Endothelial cell of umbilical vein (primary cell): ENCODE measurements at regions of chr3 and their contacts with region 1.

Region 1: DNA sequence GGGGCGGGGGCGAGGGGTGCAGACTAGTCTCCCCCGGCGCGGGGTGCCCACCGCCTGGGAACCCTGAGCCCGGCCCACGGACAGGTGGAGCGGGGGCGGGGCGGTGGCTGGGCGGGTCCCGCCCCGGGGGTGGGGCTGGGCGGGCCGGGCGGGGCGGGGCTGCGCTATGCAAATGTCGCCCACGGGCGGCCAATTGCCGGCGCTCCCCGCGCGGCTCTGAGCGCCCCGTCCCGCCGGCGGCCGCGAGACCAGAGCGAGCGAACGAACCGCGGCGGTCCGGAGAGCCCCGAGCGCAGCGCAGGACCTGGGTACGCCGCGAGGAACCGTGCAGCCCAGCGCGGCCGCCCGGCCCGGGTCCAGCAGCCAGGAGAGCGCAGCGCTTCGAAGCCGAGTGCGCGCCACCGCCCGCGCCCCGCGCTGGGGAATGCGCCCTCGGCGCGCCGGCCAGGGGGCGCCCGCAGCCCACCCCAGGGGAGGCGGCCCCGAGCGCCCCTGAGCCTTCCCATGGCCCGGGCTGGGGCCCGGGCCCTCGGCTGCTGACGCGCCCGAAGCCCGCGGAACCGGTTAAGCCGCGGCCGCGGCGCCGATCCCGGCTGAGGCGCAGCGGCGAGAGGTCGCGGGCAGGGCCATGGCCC is at the start of gene SEMA3F:
- DNase-seq: peak; percentile 72
- H3K4me3 ChIP-seq: peak within 1 kb of the TSS; percentile 29 to 77 (median 77)
- H3K27ac ChIP-seq: peak within 1 kb of the TSS; percentile 40
- H3K4me1 ChIP-seq: peaks cover 50% of the 10 kb centered on the region
- H3K27me3 ChIP-seq: no peaks in the 10 kb centered on the region
- CTCF ChIP-seq: peak; percentile 19 to 26
- POLR2A ChIP-seq: peak; percentile 86
- total RNA-seq, gene SEMA3F: 99.1 and 143 TPM in 2 replicates

Region 2: GRCh38 chr3:49882166-49882565 is 272.8 kb before region 1 on chr3:
- CTCF ChIA-PET with region 1: no interaction called
- POLR2A ChIA-PET with region 1: no interaction called
- dilution Hi-C with region 1: no loop called
- intact Hi-C with region 1: no loop called
- DNase-seq: no peak
- H3K4me3 ChIP-seq: no peak overlapping the region
- H3K27ac ChIP-seq: no peak overlapping the region
- H3K4me1 ChIP-seq: no peaks in the 10 kb centered on the region
- H3K27me3 ChIP-seq: peaks cover 7 to 8% of the 10 kb centered on the region in 2 experiments
- CTCF ChIP-seq: no peak
- POLR2A ChIP-seq: no peak

Region 3: DNA sequence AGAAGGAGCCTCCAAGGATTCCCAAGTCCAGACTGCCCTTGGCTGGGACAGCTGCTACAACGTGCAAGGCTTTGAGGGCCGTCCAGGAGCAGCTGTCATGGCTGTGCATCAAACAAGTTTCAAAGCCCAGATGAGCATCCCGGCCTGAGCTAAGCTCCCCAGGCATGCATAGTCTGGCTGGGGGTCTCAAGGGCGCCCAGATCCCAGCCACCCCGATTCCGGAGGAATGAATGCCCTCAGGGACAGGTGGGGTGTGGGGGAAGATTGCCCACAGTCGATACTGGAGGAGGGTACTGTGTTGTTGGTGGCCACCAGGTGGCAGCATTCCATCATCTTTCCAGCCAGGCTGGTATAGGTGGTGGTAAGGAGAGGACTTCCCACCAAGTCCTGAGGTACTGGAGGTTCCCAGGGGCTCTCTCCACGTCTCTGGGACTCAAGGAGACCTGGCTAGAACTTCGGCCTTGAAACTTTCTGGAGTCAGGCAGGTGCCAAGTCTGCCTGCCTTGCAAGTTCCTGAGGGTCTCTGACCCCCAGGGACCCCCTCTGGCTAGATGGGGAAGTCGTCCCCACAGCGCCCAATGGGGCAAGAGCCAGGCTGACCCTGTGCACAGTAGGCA is 33.4 kb before region 1 on chr3:
- CTCF ChIA-PET with region 1: interaction called, 40 read pairs
- POLR2A ChIA-PET with region 1: no interaction called
- dilution Hi-C with region 1: no loop called
- intact Hi-C with region 1: loop called (anchors 1 kb)
- DNase-seq: peak; percentile 80
- H3K4me3 ChIP-seq: no peak overlapping the region
- H3K27ac ChIP-seq: no peak overlapping the region
- H3K4me1 ChIP-seq: peaks cover 7% of the 10 kb centered on the region
- H3K27me3 ChIP-seq: no peaks in the 10 kb centered on the region
- CTCF ChIP-seq: peak; percentile 75 to 79
- POLR2A ChIP-seq: peak; percentile 77

Region 4: DNA sequence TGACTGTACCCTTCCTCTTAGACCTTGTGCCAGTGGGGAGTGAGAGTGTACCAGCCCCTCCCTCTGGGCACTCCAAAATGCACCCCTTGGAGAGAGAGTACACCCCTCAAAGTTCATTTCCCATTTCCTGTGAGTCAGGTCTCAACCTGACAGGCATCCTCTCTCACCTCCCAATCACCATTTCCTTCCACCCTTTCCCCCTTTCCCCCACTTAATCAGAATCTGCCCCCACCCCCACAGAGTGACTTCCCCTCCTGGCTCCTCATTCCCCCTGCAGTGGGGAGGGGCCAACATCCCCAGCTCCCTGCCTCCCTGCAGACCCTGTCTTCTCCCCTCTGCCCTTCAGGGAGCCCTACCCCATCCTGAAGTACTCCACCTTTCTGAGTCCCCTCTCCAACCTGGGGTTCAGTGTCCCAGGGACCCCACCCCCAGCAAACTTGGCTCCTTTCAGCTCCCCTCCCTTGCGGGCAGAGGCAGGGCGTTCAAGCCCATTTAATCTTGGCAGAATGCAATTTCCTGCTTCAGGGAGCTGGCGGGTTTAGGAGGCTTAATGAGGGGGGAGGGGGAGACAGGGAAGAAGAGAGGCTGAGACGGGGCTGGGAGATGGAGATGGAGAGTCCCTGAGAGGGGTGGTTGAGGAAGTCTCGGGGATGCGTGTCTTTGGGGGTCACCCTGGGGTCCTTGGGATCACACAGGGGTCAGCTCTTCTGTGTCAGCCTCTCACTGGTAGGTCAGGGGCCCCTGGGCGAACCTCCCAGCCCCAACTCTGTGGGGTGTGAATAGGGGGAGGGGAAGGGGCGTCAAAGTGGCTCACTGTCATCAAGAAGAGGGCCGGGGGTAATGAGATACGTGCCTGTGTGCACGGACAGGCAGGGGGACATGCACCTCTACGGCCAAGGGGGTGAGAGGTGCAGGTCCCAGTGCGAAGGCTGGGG is 16.4 kb before region 1 on chr3:
- CTCF ChIA-PET with region 1: interaction called, 14 read pairs
- POLR2A ChIA-PET with region 1: interaction called, 3 read pairs
- dilution Hi-C with region 1: no loop called
- intact Hi-C with region 1: loop called (anchors 1 kb)
- DNase-seq: peak; percentile 52
- H3K4me3 ChIP-seq: no peak overlapping the region
- H3K27ac ChIP-seq: peak overlapping the region; percentile 27
- H3K4me1 ChIP-seq: peaks cover 26% of the 10 kb centered on the region
- H3K27me3 ChIP-seq: no peaks in the 10 kb centered on the region
- CTCF ChIP-seq: no peak
- POLR2A ChIP-seq: no peak

Region 5: GRCh38 chr3:50170689-50171088 is 15.7 kb after region 1 on chr3:
- CTCF ChIA-PET with region 1: interaction called, 19 read pairs
- POLR2A ChIA-PET with region 1: interaction called, 10 read pairs
- dilution Hi-C with region 1: no loop called
- intact Hi-C with region 1: loop called (anchors 1 kb)
- DNase-seq: peak; percentile 90
- H3K4me3 ChIP-seq: no peak overlapping the region
- H3K27ac ChIP-seq: peak overlapping the region; percentile 99
- H3K4me1 ChIP-seq: peaks cover 57% of the 10 kb centered on the region
- H3K27me3 ChIP-seq: no peaks in the 10 kb centered on the region
- CTCF ChIP-seq: no peak
- POLR2A ChIP-seq: peak; percentile 60

Region 6: GRCh38 chr3:50235716-50236496 is 80.9 kb after region 1 on chr3 and contains the start of gene GNAI2:
- CTCF ChIA-PET with region 1: no interaction called
- POLR2A ChIA-PET with region 1: interaction called, 3 read pairs
- dilution Hi-C with region 1: no loop called
- intact Hi-C with region 1: loop called (anchors 5 kb)
- DNase-seq: peak; percentile 99
- H3K4me3 ChIP-seq: peak within 1 kb of the TSS; percentile 80 to 88 (median 81)
- H3K27ac ChIP-seq: peak within 1 kb of the TSS; percentile 60
- H3K4me1 ChIP-seq: peaks cover 27% of the 10 kb centered on the region
- H3K27me3 ChIP-seq: no peaks in the 10 kb centered on the region
- CTCF ChIP-seq: no peak
- POLR2A ChIP-seq: peak; percentile 98
- total RNA-seq, gene GNAI2: 767 and 773 TPM in 2 replicates